CD8-positive, alpha-beta T cell (primary cell): ENCODE measurements at regions of chr17 and their contacts with region 1.

Region 1: DNA sequence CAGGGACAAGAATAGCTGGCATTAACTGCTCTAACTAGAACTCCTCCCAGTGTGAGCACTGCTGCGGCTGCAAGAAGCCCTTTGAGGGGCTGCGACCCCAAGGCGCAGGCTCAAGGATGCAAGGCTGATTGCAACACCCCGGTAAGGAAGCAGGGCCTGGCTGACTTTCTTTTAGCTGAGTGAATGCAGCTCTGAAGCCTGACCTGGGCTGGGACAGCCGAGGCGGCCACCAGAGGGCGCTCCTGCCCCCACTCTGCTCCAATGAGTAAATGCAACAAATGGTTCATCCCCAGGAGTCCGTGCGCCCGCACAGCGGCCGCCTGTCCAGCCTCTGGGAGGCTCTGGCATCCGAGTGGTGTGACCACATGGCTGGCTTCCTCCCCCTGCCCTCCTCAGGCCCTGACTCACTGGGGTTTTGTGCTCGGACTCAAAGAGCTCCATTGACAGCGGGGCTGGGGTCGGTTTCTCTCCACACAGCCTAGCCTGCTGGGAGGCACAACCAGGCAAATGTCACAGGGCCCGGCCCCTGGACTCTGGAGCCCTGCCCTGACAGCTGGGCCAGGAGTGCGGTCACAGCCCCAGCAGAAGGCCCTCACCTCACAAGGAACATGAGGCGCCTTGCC is at the start of gene SMIM5:
- DNase-seq: peak; percentile 70 to 89 (median 82)
- ATAC-seq: peak; percentile 89
- H3K4me3 ChIP-seq: no peak within 1 kb of the TSS
- H3K4me3 Mint-ChIP-seq: no peak within 1 kb of the TSS
- H3K27ac ChIP-seq: no peak within 1 kb of the TSS
- H3K27ac Mint-ChIP-seq: no peak within 1 kb of the TSS
- H3K4me1 ChIP-seq: peaks cover 8% of the 10 kb centered on the region
- H3K4me1 Mint-ChIP-seq: peaks cover 5% of the 10 kb centered on the region
- H3K27me3 ChIP-seq: no peaks in the 10 kb centered on the region
- H3K27me3 Mint-ChIP-seq: no peaks in the 10 kb centered on the region
- CTCF ChIP-seq: peak; percentile 91
- total RNA-seq, gene SMIM5: 0.60 to 2.1 TPM

Region 2: GRCh38 chr17:75430159-75430974 is 202.6 kb before region 1 on chr17:
- CTCF ChIA-PET with region 1: interaction called, 17 read pairs
- POLR2A ChIA-PET with region 1: no interaction called
- intact Hi-C with region 1: loop called (anchors 1 to 2 kb)
- DNase-seq: no peak
- ATAC-seq: no peak
- H3K4me3 ChIP-seq: no peak overlapping the region
- H3K4me3 Mint-ChIP-seq: no peak overlapping the region
- H3K27ac ChIP-seq: no peak overlapping the region
- H3K27ac Mint-ChIP-seq: no peak overlapping the region
- H3K4me1 ChIP-seq: peaks cover 6% of the 10 kb centered on the region
- H3K4me1 Mint-ChIP-seq: peaks cover 11% of the 10 kb centered on the region
- H3K27me3 ChIP-seq: no peaks in the 10 kb centered on the region
- H3K27me3 Mint-ChIP-seq: peaks cover 5% of the 10 kb centered on the region
- CTCF ChIP-seq: no peak

Region 3: GRCh38 chr17:75614006-75614405 is 19.0 kb before region 1 on chr17:
- CTCF ChIA-PET with region 1: interaction called, 27 read pairs
- POLR2A ChIA-PET with region 1: no interaction called
- intact Hi-C with region 1: no loop called
- DNase-seq: no peak
- ATAC-seq: no peak
- H3K4me3 ChIP-seq: no peak overlapping the region
- H3K4me3 Mint-ChIP-seq: no peak overlapping the region
- H3K27ac ChIP-seq: no peak overlapping the region
- H3K27ac Mint-ChIP-seq: no peak overlapping the region
- H3K4me1 ChIP-seq: no peaks in the 10 kb centered on the region
- H3K4me1 Mint-ChIP-seq: no peaks in the 10 kb centered on the region
- H3K27me3 ChIP-seq: no peaks in the 10 kb centered on the region
- H3K27me3 Mint-ChIP-seq: no peaks in the 10 kb centered on the region
- CTCF ChIP-seq: no peak

Region 4: GRCh38 chr17:75645889-75646637 is 13.1 kb after region 1 on chr17:
- CTCF ChIA-PET with region 1: interaction called, 61 read pairs
- POLR2A ChIA-PET with region 1: interaction called, 3 read pairs
- intact Hi-C with region 1: no loop called
- DNase-seq: peak in 2 of 9 experiments; percentile 20 to 36
- ATAC-seq: peak; percentile 36
- H3K4me3 ChIP-seq: no peak overlapping the region
- H3K4me3 Mint-ChIP-seq: no peak overlapping the region
- H3K27ac ChIP-seq: no peak overlapping the region
- H3K27ac Mint-ChIP-seq: peak overlapping the region; percentile 69
- H3K4me1 ChIP-seq: peaks cover 3% of the 10 kb centered on the region
- H3K4me1 Mint-ChIP-seq: peaks cover 6% of the 10 kb centered on the region
- H3K27me3 ChIP-seq: no peaks in the 10 kb centered on the region
- H3K27me3 Mint-ChIP-seq: no peaks in the 10 kb centered on the region
- CTCF ChIP-seq: no peak

Region 5: DNA sequence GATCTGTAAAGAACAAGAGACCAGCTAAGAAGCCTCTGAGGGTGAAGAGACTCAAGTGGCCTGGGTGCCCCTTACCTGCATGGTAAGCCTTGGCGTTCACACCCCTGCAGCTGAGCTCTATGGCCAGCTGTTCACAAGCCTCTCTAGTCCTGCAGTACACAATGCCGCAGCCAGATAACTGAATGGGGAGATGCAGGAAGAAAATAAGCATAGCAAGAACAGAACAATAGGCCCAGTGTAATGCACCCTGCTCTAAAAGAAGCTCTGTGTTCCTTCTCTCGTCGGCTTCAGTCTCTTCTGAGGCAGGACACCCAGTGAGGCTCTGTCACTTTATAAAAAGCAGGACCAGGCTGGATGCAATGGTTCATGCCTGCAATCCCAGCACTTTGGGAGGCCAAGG is 28.6 kb after region 1 on chr17:
- CTCF ChIA-PET with region 1: interaction called, 48 read pairs
- POLR2A ChIA-PET with region 1: interaction called, 4 read pairs
- intact Hi-C with region 1: no loop called
- DNase-seq: no peak
- ATAC-seq: no peak
- H3K4me3 ChIP-seq: no peak overlapping the region
- H3K4me3 Mint-ChIP-seq: no peak overlapping the region
- H3K27ac ChIP-seq: no peak overlapping the region
- H3K27ac Mint-ChIP-seq: no peak overlapping the region
- H3K4me1 ChIP-seq: peaks cover 8% of the 10 kb centered on the region
- H3K4me1 Mint-ChIP-seq: peaks cover 13% of the 10 kb centered on the region
- H3K27me3 ChIP-seq: no peaks in the 10 kb centered on the region
- H3K27me3 Mint-ChIP-seq: no peaks in the 10 kb centered on the region
- CTCF ChIP-seq: no peak

Region 6: GRCh38 chr17:75693500-75694481 is 60.8 kb after region 1 on chr17:
- CTCF ChIA-PET with region 1: interaction called, 12 read pairs
- POLR2A ChIA-PET with region 1: no interaction called
- intact Hi-C with region 1: no loop called
- DNase-seq: no peak
- ATAC-seq: no peak
- H3K4me3 ChIP-seq: no peak overlapping the region
- H3K4me3 Mint-ChIP-seq: no peak overlapping the region
- H3K27ac ChIP-seq: no peak overlapping the region
- H3K27ac Mint-ChIP-seq: no peak overlapping the region
- H3K4me1 ChIP-seq: peaks cover 26% of the 10 kb centered on the region
- H3K4me1 Mint-ChIP-seq: peaks cover 34% of the 10 kb centered on the region
- H3K27me3 ChIP-seq: no peaks in the 10 kb centered on the region
- H3K27me3 Mint-ChIP-seq: no peaks in the 10 kb centered on the region
- CTCF ChIP-seq: no peak